A549 (cell line): ENCODE measurements at regions of chr2 and their contacts with region 1.

Region 1: DNA sequence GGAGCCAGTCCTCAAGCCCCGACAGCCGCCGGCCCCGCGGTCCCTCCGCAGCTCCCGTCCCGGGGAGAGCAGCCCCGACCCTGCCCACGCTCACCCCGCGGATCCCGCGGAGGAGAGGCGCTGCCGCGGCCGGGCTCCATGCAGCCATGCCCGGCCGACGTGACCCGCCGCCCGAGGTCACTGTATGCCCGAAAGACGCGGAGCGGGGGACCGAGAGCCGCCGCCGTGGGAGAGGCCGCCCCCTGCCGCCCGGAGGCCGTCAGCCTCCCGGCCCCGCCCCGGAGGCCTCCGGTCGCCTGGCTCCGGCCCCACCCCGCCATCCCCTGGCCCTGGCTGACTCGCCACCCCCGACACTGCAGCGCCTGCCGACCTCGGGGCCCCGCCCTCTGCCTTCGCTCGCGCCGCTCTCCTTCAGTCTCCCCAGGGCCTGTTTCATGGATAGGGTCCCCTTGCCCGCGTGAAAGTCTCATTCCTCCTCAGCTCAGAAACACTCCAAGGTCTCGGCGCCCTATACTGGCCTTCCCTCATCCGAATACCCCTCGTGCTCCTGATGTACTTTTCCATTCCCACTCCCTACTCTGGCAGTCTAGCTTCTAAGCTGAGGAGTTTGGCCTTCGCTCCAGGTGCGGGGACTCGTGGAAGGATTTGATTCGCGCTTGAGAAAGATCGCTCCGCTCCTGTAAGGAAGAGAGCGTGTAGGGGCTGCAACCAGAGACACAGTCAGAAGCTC is at the start of gene BOLA3:
- DNase-seq: peak; percentile 82 to 95
- ATAC-seq: peak; percentile 94 to 96
- H3K4me3 ChIP-seq: peak within 1 kb of the TSS; percentile 82
- H3K27ac ChIP-seq: peak within 1 kb of the TSS; percentile 88 to 94
- H3K4me1 ChIP-seq: peaks cover 15% of the 10 kb centered on the region
- CTCF ChIP-seq: peak; percentile 89
- EP300 ChIP-seq: no peak
- POLR2A ChIP-seq: peak; percentile 96
- RAD21 ChIP-seq: peak; percentile 34 to 64; a peak in 4 of 5 replicates
- polyA plus RNA-seq, gene BOLA3: 93.9 and 136 TPM in 2 replicates

Region 2: DNA sequence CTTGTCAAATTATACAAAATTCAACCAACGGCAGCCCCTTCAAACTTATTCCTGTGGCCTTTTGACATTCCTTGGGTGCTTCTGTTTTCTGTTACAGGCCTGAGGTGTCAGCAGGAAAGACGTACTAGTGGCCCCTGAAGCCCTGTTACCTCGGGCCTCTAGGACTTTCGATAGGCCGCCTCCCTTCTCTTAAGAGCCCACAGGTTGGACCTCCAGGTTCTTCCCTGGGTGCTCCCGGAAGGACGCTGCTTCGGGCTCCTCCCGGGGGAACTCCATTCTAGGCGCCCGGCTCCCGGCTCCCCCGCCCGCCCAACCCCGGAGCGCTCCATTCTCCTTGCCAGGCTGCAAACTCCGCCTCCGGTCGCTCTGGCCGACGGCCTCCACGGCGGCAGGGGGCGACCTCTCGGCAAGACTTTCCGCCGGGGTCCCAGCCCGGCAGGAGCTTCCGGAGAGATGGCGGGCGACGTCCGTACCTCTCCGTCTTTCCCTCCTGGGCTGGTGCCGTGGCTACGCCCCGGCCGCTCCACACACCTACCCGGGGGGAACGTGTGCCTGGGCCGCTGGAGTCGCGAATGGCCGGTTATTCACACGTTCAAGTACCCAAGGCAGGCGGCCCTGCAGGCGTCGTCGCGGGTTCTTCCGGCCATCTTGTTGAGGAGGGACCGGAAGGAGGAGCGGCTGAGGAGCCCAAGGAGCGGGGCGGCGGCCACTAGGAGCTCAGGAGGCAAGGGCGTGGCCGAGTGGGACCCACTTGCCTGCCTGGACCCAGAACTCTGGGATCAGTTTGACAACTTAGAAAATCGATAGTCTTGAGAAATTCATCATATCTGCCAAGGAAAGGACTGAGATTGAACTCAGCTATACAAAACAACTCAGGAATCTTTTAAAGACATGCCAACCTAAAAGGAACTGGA is 27.7 kb before region 1 on chr2:
- CTCF ChIA-PET with region 1: interaction called, 15 read pairs
- POLR2A ChIA-PET with region 1: interaction called, 5 read pairs
- DNase-seq: peak; percentile 84 to 92
- ATAC-seq: peak; percentile 97 to 98
- H3K4me3 ChIP-seq: peak overlapping the region; percentile 53
- H3K27ac ChIP-seq: peak overlapping the region; percentile 89 to 91
- H3K4me1 ChIP-seq: no peaks in the 10 kb centered on the region
- CTCF ChIP-seq: peak; percentile 69
- EP300 ChIP-seq: no peak
- POLR2A ChIP-seq: peak; percentile 19; the same call in 1 of the 2 replicates
- RAD21 ChIP-seq: peak in 1 of 2 experiments; percentile 21; a peak in 1 of 5 replicates

Region 3: DNA sequence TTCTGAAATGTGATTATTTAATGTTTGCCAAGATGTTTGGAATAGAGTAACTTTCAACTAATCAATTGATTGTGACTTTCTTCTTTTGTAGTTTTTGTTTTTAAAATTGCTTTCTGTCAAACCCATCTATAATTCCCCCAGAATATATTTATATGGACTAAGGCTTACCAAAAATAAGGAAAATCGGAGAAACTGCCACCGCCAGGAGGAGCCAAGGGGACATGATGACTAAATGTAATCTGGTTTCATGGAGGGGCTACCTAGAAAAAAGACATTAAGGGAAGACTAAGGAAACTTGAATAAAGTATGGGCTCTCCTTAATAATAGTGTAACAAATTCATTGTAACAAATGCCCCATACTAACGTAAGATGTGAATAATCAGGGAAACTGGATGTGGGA is 19.7 kb before region 1 on chr2:
- CTCF ChIA-PET with region 1: interaction called, 12 read pairs
- POLR2A ChIA-PET with region 1: interaction called, 5 read pairs
- DNase-seq: no peak
- ATAC-seq: no peak
- H3K4me3 ChIP-seq: no peak overlapping the region
- H3K27ac ChIP-seq: no peak overlapping the region
- H3K4me1 ChIP-seq: no peaks in the 10 kb centered on the region
- CTCF ChIP-seq: no peak
- EP300 ChIP-seq: no peak
- POLR2A ChIP-seq: no peak
- RAD21 ChIP-seq: no peak

Region 4: GRCh38 chr2:74168739-74169138 is 20.8 kb after region 1 on chr2:
- CTCF ChIA-PET with region 1: interaction called, 100 read pairs
- POLR2A ChIA-PET with region 1: no interaction called
- DNase-seq: no peak
- ATAC-seq: no peak
- H3K4me3 ChIP-seq: no peak overlapping the region
- H3K27ac ChIP-seq: no peak overlapping the region
- H3K4me1 ChIP-seq: no peaks in the 10 kb centered on the region
- CTCF ChIP-seq: no peak
- EP300 ChIP-seq: no peak
- POLR2A ChIP-seq: no peak
- RAD21 ChIP-seq: no peak

Region 5: GRCh38 chr2:74178201-74179062 is 30.5 kb after region 1 on chr2 and contains the start of gene MOB1A:
- CTCF ChIA-PET with region 1: interaction called, 22 read pairs
- POLR2A ChIA-PET with region 1: interaction called, 7 read pairs
- DNase-seq: peak; percentile 96 to 99
- ATAC-seq: peak; percentile 98 to 99
- H3K4me3 ChIP-seq: peak within 1 kb of the TSS; percentile 85
- H3K27ac ChIP-seq: peak within 1 kb of the TSS; percentile 92 to 95
- H3K4me1 ChIP-seq: peaks cover 12% of the 10 kb centered on the region; the same call in 2 of the 3 replicates
- CTCF ChIP-seq: no peak
- EP300 ChIP-seq: no peak
- POLR2A ChIP-seq: peak; percentile 86
- RAD21 ChIP-seq: no peak
- polyA plus RNA-seq, gene MOB1A: 108 and 118 TPM in 2 replicates

Region 6: GRCh38 chr2:74587664-74588277 is 439.9 kb after region 1 on chr2:
- CTCF ChIA-PET with region 1: no interaction called
- POLR2A ChIA-PET with region 1: no interaction called
- DNase-seq: peak; percentile 77 to 82
- ATAC-seq: peak; percentile 91 to 92
- H3K4me3 ChIP-seq: no peak overlapping the region
- H3K27ac ChIP-seq: no peak overlapping the region
- H3K4me1 ChIP-seq: peaks cover 14% of the 10 kb centered on the region
- CTCF ChIP-seq: peak; percentile 91
- EP300 ChIP-seq: no peak
- POLR2A ChIP-seq: no peak
- RAD21 ChIP-seq: peak; percentile 93 to 95